ENCODE measurements at regions of chr5 and their contacts with region 1.

Region 1: DNA sequence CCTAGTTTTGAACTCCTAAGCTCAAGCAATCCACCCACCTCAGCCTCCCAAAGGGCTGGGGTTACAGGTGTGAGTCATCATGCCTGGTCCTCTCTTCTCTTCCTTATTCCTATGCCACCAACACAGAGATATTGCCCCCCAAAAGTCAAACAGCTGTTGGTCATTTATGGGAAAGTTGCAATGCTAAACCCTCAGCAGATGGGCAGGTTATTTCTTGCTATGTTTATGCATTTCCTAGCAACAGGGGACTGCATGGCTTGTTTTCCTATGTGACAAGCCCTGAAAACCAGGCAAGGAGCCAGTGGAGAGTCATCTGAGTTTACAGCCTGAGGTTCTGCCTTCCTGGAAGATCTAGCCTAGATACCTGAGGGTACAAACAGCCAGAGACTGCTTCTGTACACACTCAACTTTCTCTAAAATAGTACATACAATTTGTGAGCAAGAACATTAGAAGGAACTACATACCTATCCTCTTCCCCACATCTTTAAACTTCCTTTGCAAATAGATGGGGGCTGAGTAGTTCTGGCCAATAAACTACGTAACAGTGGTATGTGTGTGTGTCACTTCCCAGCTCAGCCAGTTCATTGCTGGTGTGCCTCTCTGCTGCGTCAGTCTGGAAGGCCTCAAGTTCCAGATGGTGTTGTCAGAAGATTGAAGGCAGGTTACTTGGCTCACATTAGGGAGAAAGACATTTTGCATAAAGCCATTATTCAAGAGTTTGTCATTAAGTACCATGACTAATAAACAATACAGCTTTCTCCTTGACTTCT is 65.4 kb downstream of the CSNK1A1 start:
- DNase-seq: peak; percentile 100
- ATAC-seq: peak; percentile 75
- H3K4me3 ChIP-seq: peak overlapping the region; percentile 9; the same call in 1 of the 2 replicates
- H3K27ac ChIP-seq: peak overlapping the region; percentile 94
- H3K4me1 ChIP-seq: peaks cover 87% of the 10 kb centered on the region
- H3K27me3 ChIP-seq: no peaks in the 10 kb centered on the region
- CTCF ChIP-seq: no peak

Region 2: DNA sequence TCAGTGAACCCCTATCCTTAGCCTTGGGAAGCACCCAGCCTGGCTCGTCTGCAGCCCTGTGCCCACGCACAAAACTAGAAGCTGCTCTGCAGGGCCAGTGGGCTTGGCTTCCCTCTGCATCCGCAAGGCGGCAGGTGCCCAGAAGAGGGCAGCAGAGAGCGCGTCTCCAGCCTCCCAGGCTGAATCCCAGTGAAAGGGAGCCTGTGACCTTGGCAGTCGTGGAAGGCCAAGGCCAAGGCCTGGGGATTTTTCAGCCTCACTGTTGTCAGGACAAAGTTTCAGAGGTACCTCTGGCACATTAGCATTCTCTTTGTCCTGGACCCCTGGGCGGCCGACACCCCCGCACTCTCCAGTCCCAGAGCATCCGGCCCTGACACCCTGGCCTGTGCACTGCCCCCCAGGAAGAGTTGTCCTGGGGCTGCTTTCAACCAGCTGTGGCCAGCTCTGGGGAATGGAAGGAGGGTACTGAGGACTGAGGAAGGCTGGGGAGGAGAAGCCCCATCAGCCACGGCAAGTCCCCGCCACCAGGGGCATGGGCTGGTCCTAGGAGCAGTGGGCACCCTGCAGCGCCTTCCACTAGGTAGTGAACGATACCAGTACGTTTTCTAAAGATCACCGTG is 43.2 kb before region 1 on chr5:
- CTCF ChIA-PET with region 1: interaction called, 19 read pairs
- POLR2A ChIA-PET with region 1: interaction called, 6 read pairs
- intact Hi-C with region 1: loop called (anchors 1 kb)
- DNase-seq: peak; percentile 95
- ATAC-seq: peak; percentile 51
- H3K4me3 ChIP-seq: no peak overlapping the region
- H3K27ac ChIP-seq: peak overlapping the region; percentile 28
- H3K4me1 ChIP-seq: peaks cover 49% of the 10 kb centered on the region
- H3K27me3 ChIP-seq: no peaks in the 10 kb centered on the region
- CTCF ChIP-seq: peak; percentile 99

Region 3: GRCh38 chr5:149497357-149497756 is 11.5 kb after region 1 on chr5:
- CTCF ChIA-PET with region 1: interaction called, 8 read pairs
- POLR2A ChIA-PET with region 1: interaction called, 4 read pairs
- intact Hi-C with region 1: loop called (anchors 1 kb)
- DNase-seq: peak; percentile 98
- ATAC-seq: peak; percentile 93
- H3K4me3 ChIP-seq: no peak overlapping the region
- H3K27ac ChIP-seq: peak overlapping the region; percentile 75
- H3K4me1 ChIP-seq: peaks cover 68% of the 10 kb centered on the region
- H3K27me3 ChIP-seq: no peaks in the 10 kb centered on the region
- CTCF ChIP-seq: no peak

Region 4: DNA sequence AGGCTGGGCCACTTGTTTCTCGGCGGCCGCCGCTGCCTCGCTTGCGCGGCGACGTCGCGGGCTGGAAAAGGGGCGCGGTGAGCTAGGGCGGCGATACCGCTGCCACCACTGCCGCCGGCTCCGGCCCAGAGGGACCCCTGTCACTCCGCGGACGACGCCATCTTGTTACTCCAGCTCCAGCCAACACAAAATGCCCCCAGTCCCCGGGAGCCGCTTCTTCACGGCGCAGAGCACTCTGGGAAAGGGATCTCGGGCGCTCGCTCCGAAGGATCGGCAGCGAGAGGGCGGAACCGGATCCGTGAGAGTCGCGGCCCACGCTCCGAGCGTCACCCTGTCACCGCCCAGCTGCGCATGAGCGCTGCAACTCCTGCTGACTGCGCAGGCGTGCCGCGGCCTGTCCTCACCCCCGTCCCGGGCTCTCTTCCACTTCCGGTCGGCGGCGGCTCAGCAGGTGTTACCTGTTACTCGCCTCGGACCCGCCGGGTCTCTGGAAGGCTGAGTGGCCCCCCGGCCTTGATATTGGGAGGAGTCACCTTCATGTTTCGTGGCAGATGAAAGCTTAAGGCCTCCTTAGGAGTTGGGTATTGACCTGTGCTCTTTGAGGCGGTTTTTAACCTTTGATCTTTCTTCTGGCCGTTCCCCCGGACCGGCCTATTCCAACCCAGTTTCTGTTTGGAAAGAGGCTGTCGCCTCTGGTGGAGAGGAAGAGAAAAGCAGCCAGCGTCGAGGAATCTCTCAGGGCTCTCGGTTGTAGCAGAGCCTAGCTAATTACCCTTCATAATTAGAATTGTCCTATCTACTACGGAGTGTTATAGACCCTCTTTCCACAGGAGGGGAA is 65.6 kb after region 1 on chr5 and contains the start of gene CSNK1A1:
- CTCF ChIA-PET with region 1: interaction called, 4 read pairs
- POLR2A ChIA-PET with region 1: interaction called, 12 read pairs
- intact Hi-C with region 1: loop called (anchors 1 kb)
- DNase-seq: peak; percentile 100
- ATAC-seq: peak; percentile 89
- H3K4me3 ChIP-seq: peak within 1 kb of the TSS; percentile 93
- H3K27ac ChIP-seq: peak within 1 kb of the TSS; percentile 85
- H3K4me1 ChIP-seq: peaks cover 36% of the 10 kb centered on the region
- H3K27me3 ChIP-seq: no peaks in the 10 kb centered on the region
- CTCF ChIP-seq: peak; percentile 98
- total RNA-seq, gene CSNK1A1: 500 and 586 TPM in 2 replicates

Region 5: DNA sequence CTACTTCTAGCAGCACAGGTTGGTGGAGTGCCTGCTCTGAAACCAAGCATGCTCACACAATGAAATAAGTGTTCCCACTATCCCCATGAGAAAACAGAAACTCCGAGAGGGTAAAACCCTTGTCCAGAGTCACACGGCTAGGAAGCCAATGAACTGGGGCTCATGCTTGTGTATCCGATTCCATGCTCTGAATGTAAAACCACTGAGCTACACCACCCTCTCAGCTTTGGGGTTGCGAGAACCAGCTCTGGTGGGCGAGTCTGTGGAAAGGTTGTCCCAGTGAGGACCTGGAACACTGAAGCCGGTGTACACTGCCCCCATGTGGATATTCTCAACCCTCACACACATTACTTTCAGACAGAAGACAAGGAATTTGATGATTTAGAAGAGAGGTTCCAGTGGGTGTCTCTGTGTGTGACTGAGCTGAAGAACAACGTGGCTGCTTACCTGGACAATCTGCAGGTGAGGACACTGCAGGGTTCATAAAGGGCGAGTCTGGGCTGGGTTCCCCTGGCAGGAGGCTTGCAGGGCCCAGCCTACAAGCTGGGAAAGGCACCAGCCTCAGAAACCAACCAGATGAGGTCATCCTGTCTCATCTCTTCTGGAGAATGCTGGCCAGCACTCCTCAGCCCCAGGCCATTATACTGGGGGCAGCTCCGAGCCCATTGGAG is 132.9 kb after region 1 on chr5:
- CTCF ChIA-PET with region 1: no interaction called
- POLR2A ChIA-PET with region 1: interaction called, 4 read pairs
- intact Hi-C with region 1: loop called (anchors 5 kb)
- DNase-seq: peak; percentile 91
- ATAC-seq: peak; percentile 88
- H3K4me3 ChIP-seq: no peak overlapping the region
- H3K27ac ChIP-seq: peak overlapping the region; percentile 57
- H3K4me1 ChIP-seq: peaks cover 30% of the 10 kb centered on the region
- H3K27me3 ChIP-seq: no peaks in the 10 kb centered on the region
- CTCF ChIP-seq: peak; percentile 99

Region 6: GRCh38 chr5:149828161-149828884 is 342.5 kb after region 1 on chr5:
- CTCF ChIA-PET with region 1: no interaction called
- POLR2A ChIA-PET with region 1: no interaction called
- intact Hi-C with region 1: no loop called
- DNase-seq: peak; percentile 97
- ATAC-seq: peak; percentile 95
- H3K4me3 ChIP-seq: no peak overlapping the region
- H3K27ac ChIP-seq: no peak overlapping the region
- H3K4me1 ChIP-seq: no peaks in the 10 kb centered on the region
- H3K27me3 ChIP-seq: no peaks in the 10 kb centered on the region
- CTCF ChIP-seq: peak; percentile 99

Region 7: DNA sequence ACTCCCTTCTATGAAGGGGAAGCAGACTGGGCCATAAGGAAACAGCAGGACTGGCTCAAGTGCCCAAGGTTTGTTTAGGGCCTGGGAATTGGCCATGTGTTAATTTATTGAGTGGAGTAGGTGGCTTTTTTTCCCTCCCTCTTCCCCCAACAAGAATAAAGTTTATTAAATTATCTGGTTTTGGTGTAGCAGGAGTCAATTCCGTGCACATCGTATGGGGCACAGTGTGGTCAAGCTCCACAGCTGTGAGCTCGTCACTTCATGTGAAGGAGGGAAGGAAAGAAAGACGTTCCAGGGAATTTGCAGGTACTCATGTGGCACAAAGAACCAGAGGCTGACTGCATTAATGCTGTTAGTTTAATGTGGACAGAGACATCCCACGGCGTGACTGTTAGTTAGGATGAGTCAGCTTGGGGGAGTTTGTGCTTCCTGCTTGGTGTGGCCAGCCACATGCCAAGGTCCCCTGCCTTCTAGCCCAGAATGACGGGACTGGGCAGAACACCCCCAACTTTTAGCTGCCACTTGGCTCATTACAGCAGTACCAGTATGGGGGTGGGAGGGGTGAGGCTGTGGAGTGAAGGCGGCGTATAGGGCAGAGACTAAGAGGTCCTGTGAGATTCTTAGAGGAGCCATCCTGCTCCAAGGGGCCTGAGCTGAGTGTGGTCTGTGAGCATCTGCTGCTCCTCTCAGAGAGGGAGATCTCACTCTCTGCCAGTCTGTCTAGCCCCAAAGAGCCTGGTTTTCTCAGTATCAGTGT is 567.3 kb after region 1 on chr5:
- CTCF ChIA-PET with region 1: no interaction called
- POLR2A ChIA-PET with region 1: interaction called, 12 read pairs
- intact Hi-C with region 1: no loop called
- DNase-seq: peak; percentile 90
- ATAC-seq: peak; percentile 80
- H3K4me3 ChIP-seq: no peak overlapping the region
- H3K27ac ChIP-seq: peak overlapping the region; percentile 68
- H3K4me1 ChIP-seq: peaks cover 37% of the 10 kb centered on the region
- H3K27me3 ChIP-seq: no peaks in the 10 kb centered on the region
- CTCF ChIP-seq: no peak